AG04449 (cell line): ENCODE measurements at regions of chr4 and their contacts with region 1.

Region 1: GRCh38 chr4:6974138-6974848 is 64.7 kb downstream of the TBC1D14 start:
- DNase-seq: no peak
- H3K4me3 ChIP-seq: no peak overlapping the region
- CTCF ChIP-seq: peak; percentile 92

Region 2: GRCh38 chr4:6716018-6716911 is 258.0 kb before region 1 on chr4 and contains the start of gene BLOC1S4:
- CTCF ChIA-PET with region 1: interaction called, 15 read pairs
- POLR2A ChIA-PET with region 1: no interaction called
- DNase-seq: no peak
- H3K4me3 ChIP-seq: peak within 1 kb of the TSS; percentile 92
- CTCF ChIP-seq: peak; percentile 24

Region 3: DNA sequence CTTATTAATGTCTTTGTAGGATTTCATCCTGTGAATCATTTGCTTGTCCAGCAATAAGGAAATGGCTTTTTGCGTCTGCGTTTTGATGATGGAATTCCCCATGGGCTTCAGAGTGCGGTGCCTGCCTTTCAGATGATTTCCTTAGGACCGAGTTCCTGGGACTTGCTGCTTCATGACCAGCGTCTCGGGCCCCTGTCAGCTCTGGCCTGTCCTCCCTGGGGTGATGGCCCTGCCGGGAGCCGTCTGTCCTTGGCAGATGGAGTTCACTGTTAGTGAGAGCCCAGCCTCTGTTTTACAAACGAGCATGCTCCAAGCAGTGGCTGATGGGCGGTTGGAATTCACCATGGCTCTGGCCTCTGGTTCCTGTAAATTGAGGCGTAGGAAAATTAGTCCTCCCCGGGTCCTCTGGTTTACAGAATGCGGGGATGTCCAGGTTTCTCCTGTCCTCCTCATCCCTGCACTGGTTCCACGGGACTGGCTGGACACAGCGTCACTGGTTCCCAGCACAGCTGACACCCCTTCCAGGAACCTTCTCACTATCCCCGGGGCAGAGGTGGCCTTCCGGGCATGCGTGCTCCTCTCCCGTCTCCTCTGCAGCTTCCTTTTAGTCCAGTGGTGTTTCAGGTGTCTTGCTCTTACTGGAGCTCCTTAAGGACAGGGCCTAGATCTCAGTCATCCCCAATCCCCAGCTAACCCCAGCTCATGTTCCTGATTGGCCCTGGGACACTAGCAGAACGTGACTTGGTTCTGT is 29.8 kb before region 1 on chr4:
- CTCF ChIA-PET with region 1: interaction called, 13 read pairs
- POLR2A ChIA-PET with region 1: no interaction called
- DNase-seq: no peak
- H3K4me3 ChIP-seq: no peak overlapping the region
- CTCF ChIP-seq: no peak

Region 4: GRCh38 chr4:6963139-6963611 is 11.1 kb before region 1 on chr4:
- CTCF ChIA-PET with region 1: interaction called, 27 read pairs
- POLR2A ChIA-PET with region 1: no interaction called
- DNase-seq: no peak
- H3K4me3 ChIP-seq: no peak overlapping the region
- CTCF ChIP-seq: no peak

Region 5: DNA sequence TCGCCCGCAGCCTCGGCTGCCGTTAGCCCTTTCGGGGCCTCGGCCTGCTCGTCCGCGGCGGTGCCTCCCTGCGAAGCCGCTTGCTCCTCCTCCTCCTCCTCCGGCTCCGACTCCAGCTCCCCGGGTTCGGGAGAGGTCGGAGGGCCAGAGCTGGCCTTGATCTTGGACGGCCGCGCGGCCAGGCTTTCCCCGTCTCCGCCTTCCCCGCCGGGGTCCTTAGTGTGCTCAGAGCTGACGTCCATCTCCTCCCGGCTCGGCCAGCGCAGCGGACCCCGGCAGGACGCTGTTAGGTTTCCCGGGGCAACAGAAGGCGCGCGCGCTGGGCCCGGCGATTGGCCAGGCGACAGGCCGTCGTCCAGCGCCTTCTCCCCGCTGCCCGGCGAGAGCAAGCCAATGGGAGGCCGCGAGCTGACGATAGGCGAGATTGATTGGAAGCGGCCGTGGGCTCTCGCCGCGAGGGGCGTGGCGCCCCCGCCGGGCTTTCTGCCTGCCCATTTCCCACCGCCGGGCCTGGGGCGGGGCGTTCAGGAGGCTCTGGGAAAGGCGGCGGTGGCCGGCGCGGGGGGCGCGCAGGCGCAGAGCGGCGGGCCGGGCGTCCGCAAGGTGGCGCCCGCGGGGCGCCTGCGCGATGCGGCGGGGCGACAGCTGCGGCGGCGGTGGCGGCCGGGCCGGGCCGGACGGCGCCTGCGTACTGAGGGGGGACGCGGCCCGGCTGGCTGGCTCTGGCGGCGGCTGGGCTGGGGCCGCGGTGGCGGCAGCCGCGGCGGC is 68.6 kb after region 1 on chr4 and contains the start of gene TADA2B:
- CTCF ChIA-PET with region 1: interaction called, 18 read pairs
- POLR2A ChIA-PET with region 1: no interaction called
- DNase-seq: peak; percentile 74
- H3K4me3 ChIP-seq: peak within 1 kb of the TSS; percentile 80
- CTCF ChIP-seq: peak; percentile 12